Gastrocnemius medialis (tissue), 4 donors: ENCODE measurements at regions of chrX and their contacts with region 1.

Region 1: GRCh38 chrX:9899640-9900111 is 67.5 kb upstream of the CLDN34 start:
- DNase-seq: no peak
- ATAC-seq: no peak
- H3K4me3 ChIP-seq: no peak overlapping the region
- H3K27ac ChIP-seq: no peak overlapping the region
- H3K4me1 ChIP-seq: no peaks in the 10 kb centered on the region
- H3K27me3 ChIP-seq: no peaks in the 10 kb centered on the region
- CTCF ChIP-seq: no peak
- POLR2A ChIP-seq: no peak

Region 2: GRCh38 chrX:9690046-9690445 is 209.6 kb before region 1 on chrX:
- in situ Hi-C with region 1: no loop called
- intact Hi-C with region 1: no loop called
- DNase-seq: no peak
- ATAC-seq: no peak
- H3K4me3 ChIP-seq: no peak overlapping the region
- H3K27ac ChIP-seq: no peak overlapping the region
- H3K4me1 ChIP-seq: no peaks in the 10 kb centered on the region
- H3K27me3 ChIP-seq: no peaks in the 10 kb centered on the region
- CTCF ChIP-seq: no peak
- POLR2A ChIP-seq: no peak

Region 3: GRCh38 chrX:9816094-9816700 is 83.5 kb before region 1 on chrX:
- in situ Hi-C with region 1: loop called in 1 of 4 experiments (anchors 25 kb)
- intact Hi-C with region 1: no loop called
- DNase-seq: no peak
- ATAC-seq: no peak
- H3K4me3 ChIP-seq: no peak overlapping the region
- H3K27ac ChIP-seq: no peak overlapping the region
- H3K4me1 ChIP-seq: no peaks in the 10 kb centered on the region
- H3K27me3 ChIP-seq: no peaks in the 10 kb centered on the region
- CTCF ChIP-seq: no peak
- POLR2A ChIP-seq: no peak